Aorta (tissue), 5 donors: ENCODE measurements at regions of chr13 and their contacts with region 1.

Region 1: GRCh38 chr13:30306762-30307193 is 573 bp downstream of the KATNAL1 start:
- DNase-seq: peak; percentile 96 to 98
- ATAC-seq: peak; percentile 98
- H3K4me3 ChIP-seq: peak overlapping the region; percentile 84 to 98
- H3K27ac ChIP-seq: no peak overlapping the region
- H3K4me1 ChIP-seq: peaks cover 0 to 4% of the 10 kb centered on the region in 2 donors
- H3K27me3 ChIP-seq: no peaks in the 10 kb centered on the region

Region 2: GRCh38 chr13:30071969-30072817 is 234.6 kb before region 1 on chr13:
- intact Hi-C with region 1: no loop called
- DNase-seq: no peak
- ATAC-seq: no peak
- H3K4me3 ChIP-seq: no peak overlapping the region
- H3K27ac ChIP-seq: no peak overlapping the region
- H3K4me1 ChIP-seq: no peaks in the 10 kb centered on the region
- H3K27me3 ChIP-seq: peaks cover 0 to 2% of the 10 kb centered on the region in 2 donors

Region 3: DNA sequence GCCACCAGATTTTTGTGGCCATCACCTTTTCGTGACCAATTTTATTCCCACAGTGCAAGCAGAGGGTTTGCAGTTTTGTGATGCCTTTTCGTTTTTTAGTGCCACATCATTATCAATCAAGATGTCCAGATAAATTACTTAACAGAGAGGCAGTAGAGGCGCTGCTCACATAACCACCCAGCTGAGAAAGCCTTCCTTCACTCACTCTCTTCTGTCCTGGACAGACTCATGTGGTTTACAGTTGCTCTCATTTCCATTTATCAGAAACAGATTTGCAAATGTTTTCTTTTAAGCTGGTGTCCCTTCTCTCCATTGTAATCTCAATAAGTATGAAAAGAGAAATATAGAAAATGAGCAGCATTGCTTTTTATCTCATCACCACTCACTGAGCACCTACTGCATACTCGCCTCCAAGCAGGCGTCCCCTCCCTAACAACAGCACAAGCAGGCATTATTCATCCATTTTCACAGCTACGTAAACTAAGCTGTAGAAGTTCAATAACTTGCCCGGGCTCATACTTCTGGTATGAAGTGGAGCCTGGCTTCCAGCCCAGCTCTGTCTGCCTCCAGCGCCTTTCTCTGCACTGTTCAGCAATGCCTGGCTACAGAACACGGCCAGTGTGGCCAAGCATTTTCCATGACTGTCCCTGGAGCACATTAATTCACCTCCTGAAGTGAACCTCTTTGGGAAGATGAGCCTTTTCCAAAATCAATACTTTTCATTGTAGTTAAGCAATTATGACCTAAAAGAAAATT is 35.2 kb after region 1 on chr13:
- intact Hi-C with region 1: loop called in 1 of 2 experiments (anchors 5 kb)
- DNase-seq: peak; percentile 92 to 96
- ATAC-seq: peak; percentile 91
- H3K4me3 ChIP-seq: no peak overlapping the region
- H3K27ac ChIP-seq: peak overlapping the region; percentile 63 to 88
- H3K4me1 ChIP-seq: peaks cover 2 to 15% of the 10 kb centered on the region in 2 donors
- H3K27me3 ChIP-seq: no peaks in the 10 kb centered on the region

Region 4: GRCh38 chr13:30376426-30377311 is 69.9 kb after region 1 on chr13:
- intact Hi-C with region 1: no loop called
- DNase-seq: no peak
- ATAC-seq: no peak
- H3K4me3 ChIP-seq: no peak overlapping the region
- H3K27ac ChIP-seq: no peak overlapping the region
- H3K4me1 ChIP-seq: no peaks in the 10 kb centered on the region
- H3K27me3 ChIP-seq: no peaks in the 10 kb centered on the region

Region 5: DNA sequence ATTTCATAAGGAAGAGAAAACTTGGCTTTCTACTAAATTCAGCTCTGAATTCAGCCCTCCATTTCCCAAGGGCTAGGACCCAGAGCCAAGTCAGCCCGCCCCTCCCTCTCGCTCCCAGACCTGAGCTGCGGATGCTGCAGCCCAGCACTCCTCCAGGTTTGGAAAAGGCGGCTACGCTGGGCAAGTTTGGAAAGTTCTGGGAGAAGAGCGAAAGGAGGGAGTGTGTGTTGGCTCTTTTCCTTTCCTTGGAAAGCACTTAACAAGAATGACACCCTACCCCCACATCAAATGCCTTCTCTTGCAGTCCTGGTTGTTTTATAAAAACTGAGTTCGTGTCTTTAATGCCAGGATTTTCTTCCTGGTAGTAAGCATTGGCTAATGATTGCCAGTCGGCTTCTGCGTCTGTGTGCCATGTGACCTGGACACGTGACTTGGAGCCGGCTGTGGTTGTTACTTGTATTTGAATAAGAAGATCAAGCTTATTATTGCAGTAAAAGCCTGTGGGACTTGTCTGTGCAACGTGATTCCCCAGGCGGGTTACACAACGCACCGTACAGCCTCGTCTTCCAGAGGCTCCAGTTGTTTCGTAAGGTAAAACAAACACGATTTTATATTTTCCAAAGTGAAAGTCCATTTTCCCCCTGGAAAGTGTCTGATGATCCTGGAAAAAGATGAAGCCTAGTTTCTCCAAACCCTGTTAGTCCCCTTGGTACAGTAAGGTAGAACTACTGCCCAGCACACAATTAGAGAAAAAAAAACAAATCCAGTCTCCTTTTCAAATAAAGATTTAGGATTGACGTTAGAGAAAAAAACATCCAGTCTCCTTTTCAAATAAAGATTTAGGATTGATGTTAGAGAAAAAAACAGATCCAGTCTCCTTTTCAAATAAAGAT is 88.7 kb after region 1 on chr13:
- intact Hi-C with region 1: loop called (anchors 5 to 10 kb)
- DNase-seq: peak; percentile 95
- ATAC-seq: peak; percentile 89
- H3K4me3 ChIP-seq: peak overlapping the region; percentile 78 to 87
- H3K27ac ChIP-seq: peak overlapping the region; percentile 14 to 43
- H3K4me1 ChIP-seq: no peaks in the 10 kb centered on the region
- H3K27me3 ChIP-seq: no peaks in the 10 kb centered on the region

Region 6: GRCh38 chr13:30408319-30409101 is 101.7 kb after region 1 on chr13:
- intact Hi-C with region 1: loop called in 1 of 2 experiments (anchors 10 kb)
- DNase-seq: peak; percentile 96 to 99
- ATAC-seq: peak; percentile 94
- H3K4me3 ChIP-seq: no peak overlapping the region
- H3K27ac ChIP-seq: peak overlapping the region; percentile 84 to 85
- H3K4me1 ChIP-seq: no peaks in the 10 kb centered on the region
- H3K27me3 ChIP-seq: no peaks in the 10 kb centered on the region

Region 7: GRCh38 chr13:30422054-30422839 is 115.5 kb after region 1 on chr13 and contains the start of gene UBE2L5:
- intact Hi-C with region 1: loop called in 1 of 2 experiments (anchors 5 kb)
- DNase-seq: peak; percentile 85 to 92
- ATAC-seq: peak; percentile 92
- H3K4me3 ChIP-seq: peak within 1 kb of the TSS; percentile 73 to 92
- H3K27ac ChIP-seq: peak within 1 kb of the TSS; percentile 94 to 95
- H3K4me1 ChIP-seq: no peaks in the 10 kb centered on the region
- H3K27me3 ChIP-seq: no peaks in the 10 kb centered on the region
- total RNA-seq, gene UBE2L5: 1.7 TPM in 1 of 2 donors, not detected in the other

Region 8: GRCh38 chr13:30712536-30713532 is 406.1 kb after region 1 on chr13:
- intact Hi-C with region 1: no loop called
- DNase-seq: peak in 1 of 2 donors; percentile 62
- ATAC-seq: peak; percentile 67
- H3K4me3 ChIP-seq: no peak overlapping the region
- H3K27ac ChIP-seq: no peak overlapping the region
- H3K4me1 ChIP-seq: no peaks in the 10 kb centered on the region
- H3K27me3 ChIP-seq: no peaks in the 10 kb centered on the region